ENCODE measurements at regions of chr6 and their contacts with region 1.

Region 1: GRCh38 chr6:13814176-13814937 is at the start of gene MCUR1:
- DNase-seq: peak; percentile 75 to 84
- ATAC-seq: peak; percentile 88 to 92
- H3K4me3 ChIP-seq: peak within 1 kb of the TSS; percentile 74 to 98 (median 82)
- H3K27ac ChIP-seq: peak within 1 kb of the TSS; percentile 92 to 99 (median 98)
- H3K4me1 ChIP-seq: peaks cover 30 to 31% of the 10 kb centered on the region in 2 donors
- H3K27me3 ChIP-seq: no peaks in the 10 kb centered on the region
- CTCF ChIP-seq: peak in 3 of 5 experiments; percentile 29 to 50 (median 36)
- POLR2A ChIP-seq: peak; percentile 86 to 88
- total RNA-seq, gene MCUR1: 9.5 to 29.4 (median 18.1) TPM

Region 2: DNA sequence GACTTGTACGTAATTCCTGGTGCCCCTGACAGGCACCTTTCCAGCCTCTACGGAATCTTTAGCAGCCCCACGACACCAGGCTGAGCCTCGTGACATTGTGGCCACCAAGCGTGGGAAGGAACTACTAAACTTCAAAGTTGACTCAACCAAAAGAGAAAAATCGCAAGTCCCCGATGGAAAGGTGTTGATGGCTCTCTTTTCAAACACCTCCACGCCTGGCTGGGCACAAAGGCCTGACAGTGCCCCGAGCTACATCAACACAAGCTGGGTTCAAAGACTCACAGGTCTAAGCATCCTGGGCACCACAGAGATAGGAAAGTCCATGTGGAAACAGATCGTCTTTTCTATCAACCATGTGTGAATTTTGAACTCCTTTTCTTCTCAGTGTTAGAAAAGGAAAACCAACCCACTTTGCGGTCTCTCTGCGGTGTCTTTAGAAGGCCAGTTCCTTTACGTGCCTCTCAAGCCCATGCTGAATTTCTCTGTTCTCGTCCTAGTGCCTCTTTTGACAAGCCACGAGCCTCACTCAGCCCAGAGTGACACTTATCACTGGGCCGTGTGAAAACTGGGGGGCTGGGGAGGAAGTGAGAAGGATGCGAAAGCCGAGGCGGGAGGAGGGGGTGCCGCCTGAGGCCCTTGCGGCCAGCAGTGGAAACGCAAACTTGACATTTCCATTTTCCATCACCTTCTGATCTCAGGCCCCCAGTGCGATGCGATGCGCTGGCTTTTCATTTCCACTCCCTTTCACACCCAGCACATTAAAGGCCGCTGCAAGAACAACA is 386.4 kb before region 1 on chr6:
- in situ Hi-C with region 1: no loop called
- intact Hi-C with region 1: loop called (anchors 10 kb)
- DNase-seq: no peak
- ATAC-seq: no peak
- H3K4me3 ChIP-seq: no peak overlapping the region
- H3K27ac ChIP-seq: peak overlapping the region; percentile 1 to 57 (median 6)
- H3K4me1 ChIP-seq: peaks cover 62 to 68% of the 10 kb centered on the region in 2 donors
- H3K27me3 ChIP-seq: no peaks in the 10 kb centered on the region
- CTCF ChIP-seq: no peak
- POLR2A ChIP-seq: no peak

Region 3: DNA sequence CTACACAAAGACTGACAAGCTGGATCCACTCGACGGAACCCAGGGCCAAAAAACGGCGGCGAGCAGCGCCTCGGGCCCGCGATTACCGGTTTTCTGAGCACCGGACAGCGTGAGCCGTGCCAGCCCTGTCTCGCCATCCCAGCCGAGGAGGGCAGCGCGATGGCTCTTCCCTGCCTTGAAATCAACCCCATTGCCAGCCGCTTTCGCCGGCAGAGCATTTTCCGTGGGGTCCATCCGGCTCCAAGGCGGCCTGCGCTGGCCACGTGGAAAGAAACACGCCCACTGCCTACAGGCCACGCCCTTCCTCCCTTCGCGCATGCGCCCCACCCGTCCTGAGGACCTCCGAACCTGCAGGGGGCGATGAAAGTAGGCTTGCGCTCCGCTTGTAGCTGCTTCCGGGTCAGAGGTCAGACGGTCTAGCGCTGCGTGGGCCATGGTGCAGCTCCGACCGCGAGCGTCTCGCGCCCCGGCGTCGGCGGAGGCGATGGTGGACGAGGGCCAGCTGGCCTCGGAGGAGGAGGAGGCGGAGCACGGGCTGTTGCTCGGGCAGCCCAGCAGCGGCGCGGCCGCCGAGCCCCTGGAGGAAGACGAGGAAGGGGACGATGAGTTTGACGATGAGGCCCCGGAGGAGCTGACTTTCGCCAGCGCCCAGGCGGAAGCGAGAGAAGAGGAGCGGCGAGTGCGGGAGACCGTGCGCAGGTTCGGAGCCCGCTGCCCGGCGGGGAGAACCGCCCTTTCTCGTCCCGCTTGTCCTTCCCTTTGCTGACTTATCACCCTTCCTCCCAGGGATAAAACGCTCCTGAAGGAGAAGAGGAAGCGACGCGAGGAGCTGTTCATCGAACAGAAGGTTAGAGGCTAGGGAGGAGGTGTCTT is 199.2 kb before region 1 on chr6 and contains the start of gene NOL7:
- in situ Hi-C with region 1: no loop called
- intact Hi-C with region 1: loop called (anchors 1 kb)
- DNase-seq: peak; percentile 97 to 98
- ATAC-seq: peak; percentile 95 to 97
- H3K4me3 ChIP-seq: peak within 1 kb of the TSS; percentile 68 to 95 (median 78)
- H3K27ac ChIP-seq: peak within 1 kb of the TSS; percentile 84 to 91 (median 88)
- H3K4me1 ChIP-seq: peaks cover 21 to 34% of the 10 kb centered on the region in 2 donors
- H3K27me3 ChIP-seq: no peaks in the 10 kb centered on the region
- CTCF ChIP-seq: peak; percentile 88 to 93 (median 92)
- POLR2A ChIP-seq: peak; percentile 67 to 73
- total RNA-seq, gene NOL7: 44.9 to 69.0 (median 63.8) TPM

Region 4: DNA sequence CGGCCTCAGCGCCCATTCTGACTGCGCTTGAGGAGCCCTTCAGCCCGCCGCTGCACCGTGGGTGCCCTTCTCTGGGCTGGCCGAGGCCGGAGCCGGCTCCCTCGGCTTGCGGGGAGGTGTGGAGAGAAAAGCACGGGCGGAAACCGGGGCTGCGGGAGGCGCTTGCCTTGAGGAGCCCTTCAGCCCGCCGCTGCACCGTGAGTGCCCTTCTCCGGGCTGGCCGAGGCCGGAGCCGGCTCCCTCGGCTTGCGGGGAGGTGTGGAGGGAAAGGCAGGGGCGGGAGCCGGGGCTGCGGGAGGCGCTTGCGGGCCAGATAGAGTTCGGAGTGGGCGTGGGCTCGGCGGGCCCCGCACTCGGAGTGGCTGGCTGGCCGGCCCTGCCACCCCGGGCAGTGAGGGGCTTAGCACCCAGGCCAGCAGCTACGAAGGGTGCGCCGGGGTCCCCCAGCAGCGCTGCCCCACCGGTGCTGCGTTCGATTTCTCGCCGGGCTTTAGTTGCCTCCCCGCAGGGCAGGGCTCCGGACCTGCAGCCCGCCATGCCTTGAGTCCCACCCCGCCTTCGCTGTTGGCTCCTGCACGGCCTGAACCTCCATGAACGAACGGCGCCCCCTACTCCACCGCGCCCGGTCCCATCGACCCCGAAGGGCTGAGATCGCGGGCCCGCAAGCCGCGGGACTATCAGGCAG is 45.7 kb after region 1 on chr6:
- in situ Hi-C with region 1: no loop called
- intact Hi-C with region 1: no loop called
- DNase-seq: no peak
- ATAC-seq: no peak
- H3K4me3 ChIP-seq: peak overlapping the region; percentile 13 to 53 (median 42)
- H3K27ac ChIP-seq: no peak overlapping the region
- H3K4me1 ChIP-seq: peaks cover 0 to 4% of the 10 kb centered on the region in 2 donors
- H3K27me3 ChIP-seq: peaks cover 26 to 32% (median 30%) of the 10 kb centered on the region in 3 donors
- CTCF ChIP-seq: no peak
- POLR2A ChIP-seq: no peak

Region 5: GRCh38 chr6:14117158-14118090 is 303.1 kb after region 1 on chr6 and contains the start of gene CD83:
- in situ Hi-C with region 1: no loop called
- intact Hi-C with region 1: no loop called
- DNase-seq: no peak
- ATAC-seq: peak; percentile 49 to 57
- H3K4me3 ChIP-seq: peak within 1 kb of the TSS; percentile 53 to 66 (median 64)
- H3K27ac ChIP-seq: peak within 1 kb of the TSS in 2 of 4 donors; percentile 26 to 42
- H3K4me1 ChIP-seq: peaks cover 5% of the 10 kb centered on the region in 2 donors
- H3K27me3 ChIP-seq: no peaks in the 10 kb centered on the region
- CTCF ChIP-seq: no peak
- POLR2A ChIP-seq: peak in 1 of 2 donors; percentile 54
- total RNA-seq, gene CD83: 0.27 to 0.72 (median 0.56) TPM in 3 of 4 donors, not detected in the other

Measured in gastrocnemius medialis (tissue), 4 donors.